BJ (cell line): ENCODE measurements at regions of chr20 and their contacts with region 1.

Region 1: DNA sequence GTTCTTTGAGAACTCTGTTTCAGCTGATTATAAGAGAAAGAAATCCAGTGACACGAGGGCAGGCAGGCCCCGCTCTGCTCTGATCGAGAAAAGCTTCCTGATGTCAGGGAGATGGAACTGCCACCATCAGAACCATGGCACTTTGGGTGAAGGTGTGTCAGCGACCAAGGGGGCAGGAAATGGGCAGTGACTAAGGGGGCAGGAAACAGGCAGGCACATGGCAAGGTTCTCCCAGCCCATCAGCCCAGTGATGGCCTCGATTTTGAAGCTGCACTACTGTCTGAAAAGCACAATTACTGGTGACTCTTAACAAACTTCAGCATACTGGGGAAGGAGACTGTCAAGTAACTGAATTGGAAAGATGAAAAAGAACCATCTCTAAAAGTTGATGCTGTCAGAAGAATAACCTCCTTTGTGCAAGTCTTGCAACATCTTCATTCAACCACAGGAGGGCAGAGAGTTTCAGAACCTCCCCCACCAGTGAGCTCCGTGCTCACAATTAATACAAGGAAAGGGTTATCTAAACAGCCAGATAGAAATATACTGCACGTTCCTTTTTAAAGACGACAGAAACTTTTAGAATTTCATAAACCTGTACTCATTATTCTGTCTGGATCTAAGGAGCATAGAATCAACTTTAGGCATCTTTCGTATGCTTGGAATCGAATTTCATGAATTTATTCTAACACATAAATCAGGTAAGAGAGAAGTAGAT is 39.1 kb downstream of the TMX4 start:
- DNase-seq: no peak
- H3K4me3 ChIP-seq: no peak overlapping the region
- H3K27me3 ChIP-seq: no peaks in the 10 kb centered on the region
- CTCF ChIP-seq: peak; percentile 61

Region 2: DNA sequence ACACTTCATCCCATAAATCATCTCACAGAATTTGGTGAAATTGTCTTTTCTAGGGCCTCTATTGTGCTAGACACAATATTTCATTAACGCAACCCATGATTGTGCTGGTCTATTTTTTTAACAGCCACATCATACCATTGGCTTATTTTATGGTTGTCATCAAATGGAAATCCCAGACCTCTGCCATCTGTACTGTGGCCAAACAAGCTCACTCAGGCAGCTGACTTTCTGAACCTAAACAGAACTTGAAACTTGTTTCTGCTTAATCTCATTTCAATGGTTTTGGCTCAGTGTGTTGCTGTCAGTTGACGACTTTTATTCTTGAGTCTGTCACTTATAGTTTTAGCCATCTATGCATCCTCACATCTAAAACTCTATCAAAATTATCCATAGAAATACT is 152.1 kb before region 1 on chr20:
- CTCF ChIA-PET with region 1: no interaction called
- POLR2A ChIA-PET with region 1: no interaction called
- DNase-seq: no peak
- H3K4me3 ChIP-seq: no peak overlapping the region
- H3K27me3 ChIP-seq: no peaks in the 10 kb centered on the region
- CTCF ChIP-seq: no peak

Region 3: GRCh38 chr20:7935027-7935551 is 45.4 kb before region 1 on chr20:
- CTCF ChIA-PET with region 1: interaction called, 12 read pairs
- POLR2A ChIA-PET with region 1: no interaction called
- DNase-seq: no peak
- H3K4me3 ChIP-seq: no peak overlapping the region
- H3K27me3 ChIP-seq: no peaks in the 10 kb centered on the region; the same call in none of the 2 replicates
- CTCF ChIP-seq: no peak

Region 4: DNA sequence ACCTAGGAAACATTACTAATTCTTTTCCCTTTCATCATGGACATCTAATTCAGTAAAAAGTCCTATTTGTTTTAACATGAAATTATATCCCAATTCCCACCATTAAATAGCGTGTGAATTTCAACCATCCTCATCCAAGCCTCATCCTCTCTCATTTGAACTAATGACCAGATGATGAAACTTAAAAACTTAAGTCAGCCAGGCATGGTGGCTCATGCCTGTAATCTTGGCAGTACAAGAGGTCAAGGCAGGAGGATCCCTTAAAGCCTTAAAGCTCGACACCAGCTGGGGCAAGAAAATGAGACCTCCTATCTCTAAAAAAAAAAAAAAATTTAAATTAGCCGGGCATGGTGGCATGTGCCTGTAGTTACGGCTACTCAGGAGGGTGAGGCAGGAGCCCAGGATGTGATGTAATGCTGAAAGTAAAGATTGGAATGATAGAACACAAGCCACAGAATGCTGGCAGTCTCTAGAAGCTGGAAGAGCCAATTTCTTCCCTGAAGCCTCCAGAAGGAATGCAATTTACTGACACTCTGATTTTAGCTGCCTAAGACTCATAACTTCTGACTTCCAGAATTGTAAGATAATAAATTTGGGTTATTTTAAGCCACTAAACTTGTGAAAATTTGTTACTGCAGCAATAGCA is 13.2 kb before region 1 on chr20:
- CTCF ChIA-PET with region 1: interaction called, 11 read pairs
- POLR2A ChIA-PET with region 1: no interaction called
- DNase-seq: peak; percentile 66
- H3K4me3 ChIP-seq: no peak overlapping the region
- H3K27me3 ChIP-seq: no peaks in the 10 kb centered on the region
- CTCF ChIP-seq: no peak

Region 5: DNA sequence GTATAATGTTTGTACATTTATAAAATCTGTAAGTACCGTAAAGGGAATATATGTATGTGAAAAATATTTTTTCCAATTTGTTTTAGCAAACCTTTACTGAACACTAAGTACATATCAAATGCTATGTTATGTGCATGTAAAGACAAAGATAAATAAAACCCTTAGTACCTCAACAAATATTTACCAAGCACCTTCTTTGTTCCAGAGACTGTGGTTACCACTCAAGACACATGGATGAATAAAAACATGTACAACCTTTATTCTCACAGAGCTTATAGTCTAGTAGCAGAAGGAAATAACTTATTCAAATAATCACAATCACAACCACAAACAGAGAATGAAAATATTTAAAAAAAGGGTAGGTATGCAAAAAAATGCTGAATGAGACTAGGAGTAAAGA is 21.6 kb after region 1 on chr20:
- CTCF ChIA-PET with region 1: interaction called, 10 read pairs
- POLR2A ChIA-PET with region 1: no interaction called
- DNase-seq: no peak
- H3K4me3 ChIP-seq: no peak overlapping the region
- H3K27me3 ChIP-seq: no peaks in the 10 kb centered on the region
- CTCF ChIP-seq: no peak